GM18951 (cell line): ENCODE measurements at regions of chr15 and their contacts with region 1.

Region 1: DNA sequence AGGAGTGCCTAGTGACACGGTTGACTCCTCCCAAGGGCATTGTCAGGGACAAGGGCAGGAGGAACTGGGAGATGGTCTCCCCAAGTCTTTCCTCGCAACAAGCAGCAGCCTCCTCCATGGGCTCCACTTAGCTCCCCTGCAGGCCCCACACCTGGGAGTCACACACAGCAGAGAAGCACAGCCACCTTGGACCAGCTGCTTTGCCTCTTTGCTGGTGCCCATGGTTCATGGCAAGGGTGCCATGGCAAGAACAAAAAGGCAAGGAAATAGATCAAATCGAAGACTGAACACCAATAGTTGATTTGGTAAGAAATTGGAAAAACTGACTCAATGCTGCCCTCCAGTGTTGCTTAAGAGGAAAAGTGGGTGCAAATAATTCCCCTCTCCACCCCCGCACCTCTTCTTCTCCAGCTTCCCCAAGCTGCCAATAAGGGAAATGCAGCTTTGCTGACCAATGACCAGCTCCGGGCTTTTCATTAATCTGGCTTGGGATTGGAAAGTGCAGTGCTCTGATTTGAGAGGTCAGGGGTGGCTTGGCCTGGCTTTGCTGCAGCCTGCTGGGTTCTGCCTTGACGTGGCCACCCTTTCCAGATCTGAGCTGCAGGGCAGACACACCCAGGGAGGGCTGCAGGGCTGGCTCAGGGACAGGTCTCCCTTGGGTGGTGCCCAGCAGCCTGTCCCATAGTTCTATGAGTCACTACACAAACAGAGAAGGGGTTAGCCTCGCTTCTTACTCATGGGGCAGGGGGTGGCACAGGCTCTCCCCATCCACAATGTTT is 162.0 kb downstream of the KLF13 start:
- POLR2A ChIP-seq: no peak

Region 2: GRCh38 chr15:30885814-30886213 is 602.8 kb before region 1 on chr15:
- in situ Hi-C with region 1: loop called (anchors 25 kb)
- POLR2A ChIP-seq: no peak

Region 3: GRCh38 chr15:31365655-31366127 is 122.9 kb before region 1 on chr15:
- in situ Hi-C with region 1: loop called (anchors 10 kb)
- POLR2A ChIP-seq: peak; percentile 17

Region 4: GRCh38 chr15:31758126-31758525 is 269.5 kb after region 1 on chr15:
- in situ Hi-C with region 1: no loop called
- POLR2A ChIP-seq: no peak